Activated CD4-positive, alpha-beta T cell treated with anti-CD3 and anti-CD28 coated beads for 36 hours (primary cell): ENCODE measurements at regions of chr7 and their contacts with region 1.

Region 1: GRCh38 chr7:129218514-129219062 is 6.2 kb upstream of the AHCYL2 start:
- DNase-seq: peak; percentile 87
- ATAC-seq: peak; percentile 88
- H3K4me3 Mint-ChIP-seq: no peak overlapping the region
- H3K27ac Mint-ChIP-seq: peak overlapping the region; percentile 55
- H3K4me1 Mint-ChIP-seq: peaks cover 13% of the 10 kb centered on the region
- H3K27me3 Mint-ChIP-seq: no peaks in the 10 kb centered on the region

Region 2: GRCh38 chr7:128954830-128955802 is 263.5 kb before region 1 on chr7:
- CTCF ChIA-PET with region 1: no interaction called
- POLR2A ChIA-PET with region 1: no interaction called
- intact Hi-C with region 1: no loop called
- DNase-seq: no peak
- ATAC-seq: no peak
- H3K4me3 Mint-ChIP-seq: no peak overlapping the region
- H3K27ac Mint-ChIP-seq: no peak overlapping the region
- H3K4me1 Mint-ChIP-seq: peaks cover 22% of the 10 kb centered on the region
- H3K27me3 Mint-ChIP-seq: no peaks in the 10 kb centered on the region

Region 3: GRCh38 chr7:129072479-129073011 is 146.0 kb before region 1 on chr7:
- CTCF ChIA-PET with region 1: no interaction called
- POLR2A ChIA-PET with region 1: no interaction called
- intact Hi-C with region 1: no loop called
- DNase-seq: no peak
- ATAC-seq: peak; percentile 42
- H3K4me3 Mint-ChIP-seq: no peak overlapping the region
- H3K27ac Mint-ChIP-seq: no peak overlapping the region
- H3K4me1 Mint-ChIP-seq: peaks cover 3% of the 10 kb centered on the region
- H3K27me3 Mint-ChIP-seq: peaks cover 2% of the 10 kb centered on the region

Region 4: GRCh38 chr7:129197771-129198170 is 20.8 kb before region 1 on chr7:
- CTCF ChIA-PET with region 1: interaction called, 21 read pairs
- POLR2A ChIA-PET with region 1: no interaction called
- intact Hi-C with region 1: no loop called
- DNase-seq: no peak
- ATAC-seq: no peak
- H3K4me3 Mint-ChIP-seq: no peak overlapping the region
- H3K27ac Mint-ChIP-seq: no peak overlapping the region
- H3K4me1 Mint-ChIP-seq: no peaks in the 10 kb centered on the region
- H3K27me3 Mint-ChIP-seq: peaks cover 5% of the 10 kb centered on the region

Region 5: GRCh38 chr7:129247087-129247486 is 28.5 kb after region 1 on chr7:
- CTCF ChIA-PET with region 1: interaction called, 10 read pairs
- POLR2A ChIA-PET with region 1: no interaction called
- intact Hi-C with region 1: no loop called
- DNase-seq: no peak
- ATAC-seq: no peak
- H3K4me3 Mint-ChIP-seq: no peak overlapping the region
- H3K27ac Mint-ChIP-seq: no peak overlapping the region
- H3K4me1 Mint-ChIP-seq: peaks cover 2% of the 10 kb centered on the region
- H3K27me3 Mint-ChIP-seq: no peaks in the 10 kb centered on the region

Region 6: GRCh38 chr7:129278688-129279087 is 60.1 kb after region 1 on chr7:
- CTCF ChIA-PET with region 1: interaction called, 239 read pairs
- POLR2A ChIA-PET with region 1: no interaction called
- intact Hi-C with region 1: no loop called
- DNase-seq: no peak
- ATAC-seq: no peak
- H3K4me3 Mint-ChIP-seq: no peak overlapping the region
- H3K27ac Mint-ChIP-seq: no peak overlapping the region
- H3K4me1 Mint-ChIP-seq: no peaks in the 10 kb centered on the region
- H3K27me3 Mint-ChIP-seq: no peaks in the 10 kb centered on the region

Region 7: DNA sequence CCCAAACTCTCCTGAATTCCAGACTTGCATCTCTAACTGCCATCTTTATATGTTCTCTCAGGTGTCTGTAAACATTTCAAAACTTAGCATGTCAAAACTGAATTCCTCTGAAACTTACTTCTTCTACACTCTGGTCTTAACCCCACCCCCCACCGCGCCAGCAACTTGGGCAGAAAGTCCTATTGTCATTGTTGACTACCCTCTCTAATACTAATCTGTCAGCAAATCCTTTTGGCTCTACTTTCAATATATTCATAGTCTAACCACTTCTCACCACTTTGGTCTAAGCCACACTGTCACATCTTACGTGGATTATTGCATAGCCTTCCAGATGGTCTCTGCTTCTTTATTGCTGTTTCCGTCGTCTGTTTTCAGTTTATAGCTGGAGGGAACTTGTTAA is 92.8 kb after region 1 on chr7:
- CTCF ChIA-PET with region 1: interaction called, 10 read pairs
- POLR2A ChIA-PET with region 1: no interaction called
- intact Hi-C with region 1: no loop called
- DNase-seq: no peak
- ATAC-seq: no peak
- H3K4me3 Mint-ChIP-seq: no peak overlapping the region
- H3K27ac Mint-ChIP-seq: no peak overlapping the region
- H3K4me1 Mint-ChIP-seq: peaks cover 6% of the 10 kb centered on the region
- H3K27me3 Mint-ChIP-seq: no peaks in the 10 kb centered on the region

Region 8: GRCh38 chr7:129468087-129468486 is 249.5 kb after region 1 on chr7:
- CTCF ChIA-PET with region 1: interaction called, 10 read pairs
- POLR2A ChIA-PET with region 1: no interaction called
- intact Hi-C with region 1: no loop called
- DNase-seq: no peak
- ATAC-seq: no peak
- H3K4me3 Mint-ChIP-seq: no peak overlapping the region
- H3K27ac Mint-ChIP-seq: no peak overlapping the region
- H3K4me1 Mint-ChIP-seq: peaks cover 16% of the 10 kb centered on the region
- H3K27me3 Mint-ChIP-seq: no peaks in the 10 kb centered on the region

Region 9: GRCh38 chr7:130069978-130070860 is 851.6 kb after region 1 on chr7 and contains the start of gene KLHDC10:
- CTCF ChIA-PET with region 1: no interaction called
- POLR2A ChIA-PET with region 1: no interaction called
- intact Hi-C with region 1: no loop called
- DNase-seq: peak; percentile 97
- ATAC-seq: peak; percentile 98
- H3K4me3 Mint-ChIP-seq: peak within 1 kb of the TSS; percentile 91
- H3K27ac Mint-ChIP-seq: peak within 1 kb of the TSS; percentile 90
- H3K4me1 Mint-ChIP-seq: peaks cover 32% of the 10 kb centered on the region
- H3K27me3 Mint-ChIP-seq: no peaks in the 10 kb centered on the region
- total RNA-seq, gene KLHDC10: 13.5 to 14.2 TPM